ENCODE measurements at regions of chr11 and their contacts with region 1.

Region 1: GRCh38 chr11:119892311-119892808 is 163.4 kb upstream of the NECTIN1 start:
- DNase-seq: peak; percentile 77
- ATAC-seq: peak; percentile 75

Region 2: GRCh38 chr11:119779195-119780101 is 112.9 kb before region 1 on chr11:
- intact Hi-C with region 1: loop called (anchors 2 kb)
- DNase-seq: peak; percentile 79
- ATAC-seq: peak; percentile 79